A673 (cell line): ENCODE measurements at regions of chr1 and their contacts with region 1.

Region 1: GRCh38 chr1:97101509-97101908 is 379.9 kb downstream of the PTBP2 start:
- DNase-seq: peak; percentile 94
- H3K4me3 ChIP-seq: peak overlapping the region; percentile 19
- H3K27ac ChIP-seq: peak overlapping the region; percentile 52
- H3K4me1 ChIP-seq: peaks cover 15% of the 10 kb centered on the region
- H3K27me3 ChIP-seq: no peaks in the 10 kb centered on the region
- CTCF ChIP-seq: no peak

Region 2: DNA sequence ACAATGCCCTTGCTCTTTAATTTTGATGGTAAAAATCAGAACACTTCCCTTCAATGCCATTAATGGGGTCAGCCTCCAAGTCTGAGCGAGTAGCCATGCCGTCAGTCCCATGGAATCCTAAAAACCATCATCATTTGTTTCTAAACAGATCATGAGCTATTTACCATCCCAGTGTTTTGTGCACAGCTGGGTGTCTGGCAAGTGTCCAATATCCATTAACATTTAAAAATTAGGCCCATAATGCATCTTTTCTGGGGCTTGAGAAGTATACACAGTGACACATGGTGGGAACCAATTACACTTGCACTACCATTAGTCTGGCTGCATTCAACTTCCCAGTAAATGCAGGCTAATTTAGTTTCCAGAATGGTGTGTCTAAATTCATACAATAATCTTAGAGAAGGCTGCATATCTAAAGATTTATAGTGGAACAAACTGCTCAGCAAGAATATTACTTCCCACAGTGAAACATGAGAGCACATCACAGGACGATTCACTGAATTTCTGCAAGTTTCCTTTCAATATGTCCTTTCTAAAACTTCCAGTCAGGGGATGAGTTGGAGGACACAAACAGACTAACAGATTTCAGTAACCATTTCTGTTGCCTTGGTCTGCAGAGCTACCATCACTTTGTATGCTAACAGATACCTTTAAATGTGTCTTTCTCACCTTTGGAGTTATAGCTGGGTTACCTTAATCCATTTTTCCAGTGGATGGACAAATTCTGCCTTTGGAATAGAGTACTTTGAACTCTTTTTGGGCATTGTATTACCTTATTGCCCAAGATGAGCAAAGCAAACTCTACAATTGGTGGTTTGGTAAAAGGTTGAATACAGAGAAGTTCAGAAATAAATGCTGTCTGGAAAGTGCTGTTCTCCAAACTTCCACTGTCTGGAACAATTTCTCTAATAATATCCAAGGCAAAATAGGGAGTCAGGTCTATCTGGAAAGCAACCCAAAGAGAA is 121.9 kb before region 1 on chr1:
- CTCF ChIA-PET with region 1: no interaction called
- POLR2A ChIA-PET with region 1: interaction called, 17 read pairs
- intact Hi-C with region 1: no loop called
- DNase-seq: peak; percentile 92
- H3K4me3 ChIP-seq: no peak overlapping the region
- H3K27ac ChIP-seq: peak overlapping the region; percentile 93
- H3K4me1 ChIP-seq: peaks cover 60% of the 10 kb centered on the region
- H3K27me3 ChIP-seq: no peaks in the 10 kb centered on the region
- CTCF ChIP-seq: no peak

Region 3: DNA sequence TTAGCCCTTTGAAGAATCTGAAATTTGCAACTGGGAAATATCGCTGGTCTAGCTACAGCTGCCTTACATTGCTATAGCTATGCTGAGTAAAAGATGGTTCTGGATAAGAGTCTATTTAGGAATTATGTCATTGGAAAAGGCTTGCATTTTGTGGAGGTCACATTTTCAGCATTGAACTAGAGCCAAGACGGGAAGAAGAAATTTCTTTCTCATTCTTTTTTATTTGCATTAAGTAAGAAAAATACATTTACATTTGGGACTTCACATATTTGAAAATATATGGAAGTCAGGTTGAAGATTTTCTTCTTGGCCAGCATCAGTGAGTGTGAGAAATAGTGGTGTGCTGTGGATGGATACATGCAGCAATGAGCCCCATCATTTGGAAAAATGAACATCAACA is 88.4 kb before region 1 on chr1:
- CTCF ChIA-PET with region 1: interaction called, 13 read pairs
- POLR2A ChIA-PET with region 1: no interaction called
- intact Hi-C with region 1: no loop called
- DNase-seq: no peak
- H3K4me3 ChIP-seq: no peak overlapping the region
- H3K27ac ChIP-seq: no peak overlapping the region
- H3K4me1 ChIP-seq: no peaks in the 10 kb centered on the region
- H3K27me3 ChIP-seq: no peaks in the 10 kb centered on the region
- CTCF ChIP-seq: no peak